MCF 10A (cell line): ENCODE measurements at regions of chr1 and their contacts with region 1.

Region 1: GRCh38 chr1:93585059-93585966 is 96.3 kb downstream of the BCAR3 start:
- DNase-seq: peak; percentile 85
- H3K4me3 Mint-ChIP-seq: peak overlapping the region; percentile 73
- H3K27ac Mint-ChIP-seq: peak overlapping the region; percentile 95
- H3K4me1 Mint-ChIP-seq: peaks cover 34% of the 10 kb centered on the region
- H3K27me3 Mint-ChIP-seq: no peaks in the 10 kb centered on the region
- CTCF ChIP-seq: no peak

Region 2: DNA sequence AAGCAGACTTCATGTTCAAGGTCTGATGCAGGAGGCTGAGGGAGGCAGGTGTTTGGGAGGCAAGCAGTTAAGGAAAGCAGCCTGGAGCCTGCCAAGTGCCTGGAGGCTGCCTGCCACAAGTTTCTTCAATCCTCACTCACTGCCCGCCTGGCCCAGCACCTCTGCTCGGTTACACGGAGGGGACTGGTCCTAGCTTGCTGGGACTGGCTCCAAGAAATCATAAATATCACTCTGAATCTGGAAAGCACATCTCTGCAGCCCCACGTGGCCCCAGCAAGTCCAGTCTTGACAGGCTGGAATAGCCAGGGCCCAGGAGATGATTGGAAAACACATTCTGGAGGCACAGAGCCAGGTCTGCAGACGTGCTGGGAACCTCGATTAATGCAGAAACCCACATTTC is 12.4 kb after region 1 on chr1:
- CTCF ChIA-PET with region 1: interaction called, 4 read pairs
- POLR2A ChIA-PET with region 1: interaction called, 20 read pairs
- intact Hi-C with region 1: no loop called
- DNase-seq: peak; percentile 88
- H3K4me3 Mint-ChIP-seq: peak overlapping the region; percentile 34
- H3K27ac Mint-ChIP-seq: no peak overlapping the region
- H3K4me1 Mint-ChIP-seq: peaks cover 71% of the 10 kb centered on the region
- H3K27me3 Mint-ChIP-seq: no peaks in the 10 kb centered on the region
- CTCF ChIP-seq: no peak